ENCODE measurements at regions of chr7 and their contacts with region 1.

Region 1: GRCh38 chr7:55255496-55256435 is 109.4 kb upstream of the LANCL2 start:
- DNase-seq: peak; percentile 93
- H3K4me3 ChIP-seq: peak overlapping the region; percentile 56 to 67
- H3K27ac ChIP-seq: peak overlapping the region; percentile 50 to 58; a peak in 3 of 4 replicates
- H3K4me1 ChIP-seq: peaks cover 0 to 15% of the 10 kb centered on the region in 2 experiments; a peak in 1 of 4 replicates
- H3K27me3 ChIP-seq: no peaks in the 10 kb centered on the region
- CTCF ChIP-seq: peak; percentile 99
- EP300 ChIP-seq: no peak
- RAD21 ChIP-seq: peak; percentile 99

Region 2: DNA sequence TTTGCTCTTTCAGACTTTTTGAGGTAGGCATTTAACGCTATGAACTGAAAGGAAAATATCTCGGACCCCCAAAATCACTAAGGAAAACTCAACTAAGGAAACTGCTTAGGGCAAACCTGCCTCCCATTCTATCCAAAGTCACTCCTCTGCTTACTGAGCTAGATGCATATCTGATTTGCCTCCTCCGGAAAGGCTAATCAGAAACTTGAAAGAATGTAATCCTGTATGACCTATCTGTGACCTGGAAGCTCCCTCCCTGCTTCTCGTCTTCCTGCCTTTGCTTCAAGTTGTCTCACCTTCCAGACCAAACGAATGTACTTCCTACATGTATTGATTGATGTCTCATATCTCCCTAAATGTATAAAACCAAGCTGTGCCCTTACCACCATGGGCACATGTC is 438.7 kb before region 1 on chr7:
- CTCF ChIA-PET with region 1: interaction called, 28 read pairs
- POLR2A ChIA-PET with region 1: no interaction called
- DNase-seq: no peak
- H3K4me3 ChIP-seq: no peak overlapping the region
- H3K27ac ChIP-seq: no peak overlapping the region
- H3K4me1 ChIP-seq: peaks cover 0 to 5% of the 10 kb centered on the region in 2 experiments; a peak in 2 of 4 replicates
- H3K27me3 ChIP-seq: no peaks in the 10 kb centered on the region
- CTCF ChIP-seq: no peak
- EP300 ChIP-seq: no peak
- RAD21 ChIP-seq: no peak

Region 3: GRCh38 chr7:54915870-54916598 is 339.7 kb before region 1 on chr7:
- CTCF ChIA-PET with region 1: interaction called, 21 read pairs
- POLR2A ChIA-PET with region 1: no interaction called
- DNase-seq: no peak
- H3K4me3 ChIP-seq: no peak overlapping the region
- H3K27ac ChIP-seq: no peak overlapping the region
- H3K4me1 ChIP-seq: no peaks in the 10 kb centered on the region; a peak in 1 of 4 replicates
- H3K27me3 ChIP-seq: no peaks in the 10 kb centered on the region
- CTCF ChIP-seq: no peak
- EP300 ChIP-seq: no peak
- RAD21 ChIP-seq: no peak

Region 4: GRCh38 chr7:55036958-55037736 is 218.6 kb before region 1 on chr7:
- CTCF ChIA-PET with region 1: interaction called, 20 read pairs
- POLR2A ChIA-PET with region 1: no interaction called
- DNase-seq: peak; percentile 44
- H3K4me3 ChIP-seq: no peak overlapping the region
- H3K27ac ChIP-seq: no peak overlapping the region
- H3K4me1 ChIP-seq: peaks cover 11% of the 10 kb centered on the region in 2 experiments
- H3K27me3 ChIP-seq: no peaks in the 10 kb centered on the region
- CTCF ChIP-seq: no peak
- EP300 ChIP-seq: peak in 1 of 2 experiments; percentile 67; a peak in 1 of 4 replicates
- RAD21 ChIP-seq: no peak

Region 5: GRCh38 chr7:55113760-55114540 is 141.8 kb before region 1 on chr7:
- CTCF ChIA-PET with region 1: interaction called, 17 read pairs
- POLR2A ChIA-PET with region 1: no interaction called
- DNase-seq: no peak
- H3K4me3 ChIP-seq: no peak overlapping the region
- H3K27ac ChIP-seq: no peak overlapping the region
- H3K4me1 ChIP-seq: peaks cover 21 to 23% of the 10 kb centered on the region in 2 experiments; a peak in 3 of 4 replicates
- H3K27me3 ChIP-seq: no peaks in the 10 kb centered on the region
- CTCF ChIP-seq: no peak
- EP300 ChIP-seq: no peak
- RAD21 ChIP-seq: no peak

Region 6: DNA sequence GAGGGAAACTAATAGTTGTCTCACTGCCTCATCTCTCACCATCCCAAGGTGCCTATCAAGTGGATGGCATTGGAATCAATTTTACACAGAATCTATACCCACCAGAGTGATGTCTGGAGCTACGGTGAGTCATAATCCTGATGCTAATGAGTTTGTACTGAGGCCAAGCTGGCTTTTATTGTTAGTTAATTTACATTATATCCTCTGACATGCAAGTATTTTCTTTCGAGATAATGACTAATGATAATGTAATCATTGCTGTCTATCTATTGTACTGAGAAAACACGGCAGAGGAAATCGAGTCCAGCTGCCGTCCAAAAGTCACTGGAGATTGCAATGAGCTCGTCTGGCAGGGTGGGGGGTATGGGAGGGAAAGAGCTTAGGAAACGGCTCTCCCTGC is 63.0 kb before region 1 on chr7:
- CTCF ChIA-PET with region 1: interaction called, 50 read pairs
- POLR2A ChIA-PET with region 1: interaction called, 8 read pairs
- DNase-seq: peak; percentile 74
- H3K4me3 ChIP-seq: no peak overlapping the region
- H3K27ac ChIP-seq: peak overlapping the region; percentile 91 to 95
- H3K4me1 ChIP-seq: peaks cover 45 to 48% of the 10 kb centered on the region in 2 experiments
- H3K27me3 ChIP-seq: no peaks in the 10 kb centered on the region
- CTCF ChIP-seq: no peak
- EP300 ChIP-seq: peak; percentile 99 to 100
- RAD21 ChIP-seq: no peak; the same call in 1 of the 2 replicates

Region 7: DNA sequence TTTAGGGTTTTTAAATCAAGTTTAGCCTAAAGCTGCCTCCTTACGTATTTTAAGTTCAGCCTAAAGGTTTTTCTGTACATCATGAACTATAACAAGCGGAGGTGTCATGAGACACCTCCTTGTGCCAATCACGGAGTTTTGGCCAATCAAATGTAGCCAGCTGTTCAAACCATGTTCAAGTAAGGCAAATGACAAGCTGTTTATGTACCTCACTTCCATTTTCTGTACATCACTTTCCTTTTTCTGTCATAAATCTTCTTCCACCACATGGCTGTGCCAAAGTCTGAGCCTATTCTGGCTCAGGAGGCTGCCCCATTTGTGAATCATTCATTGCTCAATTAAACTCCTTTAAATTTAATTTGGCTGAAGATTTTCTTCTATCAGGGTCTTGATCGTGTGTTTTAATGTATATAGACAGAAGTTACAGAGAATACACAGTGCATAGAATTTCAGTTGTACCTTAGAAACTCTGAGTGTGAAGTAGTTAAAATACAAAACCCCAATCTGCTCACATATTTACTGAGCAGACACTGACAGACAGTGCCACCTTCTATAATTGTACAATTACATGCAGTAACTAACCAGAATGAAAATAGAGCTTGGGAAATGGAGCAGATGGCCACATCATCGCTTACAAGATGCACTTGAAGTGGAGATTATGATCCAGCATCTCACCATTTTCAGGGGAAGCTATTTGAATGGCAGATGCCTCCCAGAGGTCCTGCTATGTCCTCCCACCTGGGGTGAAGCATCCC is 32.5 kb after region 1 on chr7:
- CTCF ChIA-PET with region 1: interaction called, 19 read pairs
- POLR2A ChIA-PET with region 1: no interaction called
- DNase-seq: no peak
- H3K4me3 ChIP-seq: no peak overlapping the region
- H3K27ac ChIP-seq: no peak overlapping the region
- H3K4me1 ChIP-seq: no peaks in the 10 kb centered on the region; a peak in 1 of 4 replicates
- H3K27me3 ChIP-seq: 0 out of 2 replicates have a peak, but pooled peaks cover 4% of the 10 kb centered on the region
- CTCF ChIP-seq: peak; percentile 38
- EP300 ChIP-seq: no peak
- RAD21 ChIP-seq: peak; percentile 37

Measured in SK-N-SH (cell line).